GM13976 (cell line): ENCODE measurements at regions of chr9 and their contacts with region 1.

Region 1: GRCh38 chr9:38362852-38363593 is 29.5 kb upstream of the ALDH1B1 start:
- DNase-seq: peak; percentile 55
- CTCF ChIP-seq: no peak

Region 2: GRCh38 chr9:37746848-37747753 is 615.9 kb before region 1 on chr9:
- in situ Hi-C with region 1: loop called (anchors 25 kb)
- DNase-seq: peak; percentile 87
- CTCF ChIP-seq: peak; percentile 85

Region 3: DNA sequence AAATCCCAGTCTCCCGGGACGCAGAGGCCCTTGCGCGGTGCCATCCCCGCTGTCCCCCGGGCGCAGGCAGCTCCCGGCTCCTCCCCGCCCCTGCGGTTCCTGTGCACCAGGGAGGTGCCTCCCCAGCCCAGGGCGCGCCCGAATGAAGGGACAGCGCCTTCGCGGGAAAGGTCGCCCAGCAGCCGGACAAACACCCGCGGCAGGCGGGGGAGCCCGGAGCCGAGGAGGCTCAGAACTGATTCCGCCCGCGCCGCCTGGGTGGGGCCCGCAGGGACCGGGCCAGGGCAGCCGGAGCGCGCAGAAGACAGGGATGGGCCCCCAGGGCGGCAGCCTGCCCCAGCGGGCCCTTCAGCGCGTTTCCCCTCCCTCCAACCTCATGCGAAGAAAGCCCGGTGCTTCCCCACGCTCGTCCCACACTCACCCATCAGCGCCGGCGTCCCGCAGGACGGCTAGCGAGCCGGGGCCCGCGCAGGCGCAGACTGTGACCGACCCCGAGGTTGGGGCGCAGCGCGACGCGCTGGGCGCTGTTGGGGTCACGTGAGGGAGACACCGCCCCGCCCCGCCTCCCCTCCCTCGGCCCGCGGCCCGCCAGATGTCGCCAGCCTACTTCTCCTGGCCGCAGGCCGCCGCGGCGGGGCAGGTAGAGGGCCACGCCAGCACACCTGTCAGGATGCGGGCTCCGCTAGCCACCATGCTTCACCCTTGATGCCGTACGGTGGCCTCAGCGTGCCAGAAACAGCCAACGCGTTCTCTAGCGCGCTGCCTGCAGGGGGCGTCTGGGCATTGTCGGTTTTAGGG is 459.2 kb before region 1 on chr9 and contains the start of gene SLC25A51:
- in situ Hi-C with region 1: loop called (anchors 10 kb)
- DNase-seq: peak; percentile 98
- CTCF ChIP-seq: peak; percentile 95

Region 4: DNA sequence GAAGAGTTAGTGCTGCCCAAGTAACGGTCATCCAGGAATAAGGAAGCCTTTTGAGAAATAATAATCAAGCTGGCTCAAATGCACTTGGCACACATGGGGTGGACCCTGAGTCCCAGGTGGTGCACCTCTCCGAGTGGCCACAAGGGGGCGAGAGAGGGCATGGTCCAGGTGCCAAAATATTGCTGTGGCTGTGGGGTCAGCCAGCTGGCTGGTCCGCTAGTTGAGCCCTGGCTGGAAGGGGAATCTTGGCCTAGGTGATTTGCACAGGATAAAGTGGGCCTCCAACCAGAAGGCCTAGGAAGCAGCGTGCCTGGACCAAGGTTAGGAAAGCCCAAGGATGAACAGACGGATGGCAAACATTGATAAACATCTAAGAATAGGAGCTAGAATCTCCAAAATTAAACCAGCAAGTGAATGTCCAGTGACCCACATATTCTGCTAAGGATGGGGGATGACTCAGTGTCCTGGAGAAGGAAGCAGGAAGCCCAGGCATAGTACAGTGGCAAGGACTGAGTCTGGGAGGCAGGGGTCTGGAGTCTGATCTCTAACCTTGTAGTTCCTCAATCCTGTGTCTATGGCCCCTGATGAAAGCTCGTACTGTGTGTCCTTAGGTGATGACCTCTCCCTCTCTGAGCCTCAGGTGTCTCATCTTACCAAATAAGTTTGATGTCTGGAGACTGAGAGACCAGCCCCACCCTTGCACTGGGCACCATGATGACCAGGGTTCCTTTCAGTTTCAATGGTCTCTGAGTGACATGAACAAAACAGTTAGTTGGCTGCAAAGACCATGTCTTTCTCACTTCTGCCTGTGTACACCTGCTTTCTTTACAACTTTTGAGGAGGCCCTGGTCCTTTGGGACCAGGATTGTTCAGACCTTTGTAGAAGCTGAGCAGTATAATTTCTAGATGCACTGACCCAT is 274.8 kb before region 1 on chr9:
- in situ Hi-C with region 1: loop called (anchors 10 kb)
- DNase-seq: peak; percentile 74
- CTCF ChIP-seq: peak; percentile 93